ENCODE measurements at regions of chr10 and their contacts with region 1.

Region 1: GRCh38 chr10:8138471-8138870 is 84.0 kb downstream of the GATA3 start:
- DNase-seq: no peak
- ATAC-seq: no peak
- H3K4me3 Mint-ChIP-seq: no peak overlapping the region
- H3K27ac Mint-ChIP-seq: peak overlapping the region; percentile 60
- H3K4me1 Mint-ChIP-seq: peaks cover 36% of the 10 kb centered on the region
- H3K27me3 Mint-ChIP-seq: peaks cover 2% of the 10 kb centered on the region

Region 2: DNA sequence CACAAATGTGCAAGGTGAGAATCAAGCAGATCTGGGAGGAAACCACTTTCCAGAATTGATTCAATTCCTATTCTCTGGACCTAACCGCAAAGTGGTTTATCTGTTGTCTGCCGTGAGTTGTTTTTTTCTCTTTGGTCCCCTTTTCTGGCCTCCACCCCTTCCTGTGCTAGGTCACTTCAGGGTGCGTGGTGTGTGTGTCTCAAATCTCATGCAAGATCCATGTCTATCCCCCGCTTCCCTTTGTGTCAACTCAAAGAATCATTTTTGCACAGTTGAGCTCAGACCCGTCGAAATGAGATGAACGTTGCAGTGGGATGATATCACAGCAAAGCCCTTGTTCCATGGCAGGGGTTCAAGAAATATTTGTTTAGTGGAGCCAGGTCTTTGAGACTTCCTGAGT is 100.5 kb after region 1 on chr10:
- CTCF ChIA-PET with region 1: no interaction called
- POLR2A ChIA-PET with region 1: interaction called, 3 read pairs
- intact Hi-C with region 1: loop called (anchors 1 to 2 kb)
- DNase-seq: peak; percentile 58
- ATAC-seq: peak; percentile 54
- H3K4me3 Mint-ChIP-seq: no peak overlapping the region
- H3K27ac Mint-ChIP-seq: peak overlapping the region; percentile 1
- H3K4me1 Mint-ChIP-seq: peaks cover 51% of the 10 kb centered on the region
- H3K27me3 Mint-ChIP-seq: no peaks in the 10 kb centered on the region

Region 3: GRCh38 chr10:8315619-8316021 is 177.1 kb after region 1 on chr10:
- CTCF ChIA-PET with region 1: no interaction called
- POLR2A ChIA-PET with region 1: no interaction called
- intact Hi-C with region 1: loop called in 1 of 2 experiments (anchors 5 kb)
- DNase-seq: peak; percentile 44
- ATAC-seq: peak; percentile 84
- H3K4me3 Mint-ChIP-seq: no peak overlapping the region
- H3K27ac Mint-ChIP-seq: peak overlapping the region; percentile 78
- H3K4me1 Mint-ChIP-seq: peaks cover 56% of the 10 kb centered on the region
- H3K27me3 Mint-ChIP-seq: peaks cover 2% of the 10 kb centered on the region

Measured in activated CD4-positive, alpha-beta T cell treated with anti-CD3 and anti-CD28 coated beads for 36 hours (primary cell).